SK-N-SH (cell line): ENCODE measurements at regions of chr20 and their contacts with region 1.

Region 1: GRCh38 chr20:47663333-47664067 is 121.8 kb downstream of the SULF2 start:
- DNase-seq: peak; percentile 87
- H3K4me3 ChIP-seq: peak overlapping the region in 1 of 2 experiments; percentile 20; a peak in 1 of 4 replicates
- H3K27ac ChIP-seq: no peak overlapping the region
- H3K4me1 ChIP-seq: peaks cover 3 to 4% of the 10 kb centered on the region in 2 experiments; a peak in 2 of 4 replicates
- H3K27me3 ChIP-seq: no peaks in the 10 kb centered on the region
- CTCF ChIP-seq: peak; percentile 95
- EP300 ChIP-seq: no peak
- RAD21 ChIP-seq: peak; percentile 92

Region 2: GRCh38 chr20:47648943-47649342 is 14.6 kb before region 1 on chr20:
- CTCF ChIA-PET with region 1: interaction called, 16 read pairs
- POLR2A ChIA-PET with region 1: no interaction called
- DNase-seq: no peak
- H3K4me3 ChIP-seq: no peak overlapping the region
- H3K27ac ChIP-seq: no peak overlapping the region
- H3K4me1 ChIP-seq: no peaks in the 10 kb centered on the region
- H3K27me3 ChIP-seq: no peaks in the 10 kb centered on the region
- CTCF ChIP-seq: no peak
- EP300 ChIP-seq: no peak
- RAD21 ChIP-seq: no peak

Region 3: DNA sequence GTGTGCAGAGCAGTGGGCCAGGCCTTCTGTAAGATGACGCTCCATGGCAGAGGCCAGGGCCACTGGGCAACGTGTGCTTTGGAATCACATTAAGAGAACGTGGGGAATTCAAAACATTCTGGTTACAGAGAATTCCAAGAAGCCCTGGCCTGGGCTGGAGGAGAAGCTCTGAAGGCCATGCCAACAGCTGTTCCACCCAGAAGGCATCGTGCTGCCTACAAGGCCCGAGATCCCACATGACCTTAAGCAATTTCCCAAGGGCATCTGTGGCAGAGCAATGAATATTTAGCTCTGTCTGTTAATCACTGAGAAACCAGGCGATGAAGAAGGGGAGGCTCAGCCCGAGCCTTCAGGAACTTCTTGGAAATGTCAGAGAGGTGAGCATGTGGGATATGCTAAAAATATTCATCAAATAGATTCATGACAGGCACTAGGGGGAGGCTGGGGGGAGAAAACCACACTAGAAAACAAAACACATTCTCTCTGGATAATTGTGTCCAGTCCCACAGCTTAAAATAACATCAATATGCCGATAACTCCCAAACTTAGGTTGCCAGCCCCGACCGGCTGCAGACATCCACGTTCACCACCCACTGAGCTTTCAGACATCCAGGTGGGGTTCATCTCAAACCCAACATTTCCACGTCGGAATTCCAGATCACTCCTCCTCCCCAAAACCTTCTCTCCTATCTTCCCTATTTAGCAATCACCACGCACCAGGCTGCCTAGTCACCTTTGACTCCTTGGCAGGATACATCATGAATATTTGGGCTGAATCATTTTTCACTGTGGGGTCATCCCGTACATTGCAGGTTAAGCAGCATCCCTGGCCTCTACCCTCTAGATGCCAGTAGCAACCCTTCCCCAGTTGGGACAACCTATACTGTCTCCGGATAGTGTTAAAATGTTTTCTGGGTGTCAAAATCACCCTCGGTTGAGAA is 115.2 kb after region 1 on chr20:
- CTCF ChIA-PET with region 1: interaction called, 11 read pairs
- POLR2A ChIA-PET with region 1: no interaction called
- DNase-seq: no peak
- H3K4me3 ChIP-seq: no peak overlapping the region
- H3K27ac ChIP-seq: no peak overlapping the region
- H3K4me1 ChIP-seq: peaks cover 0 to 40% of the 10 kb centered on the region in 2 experiments; a peak in 2 of 4 replicates
- H3K27me3 ChIP-seq: 0 out of 2 replicates have a peak, but pooled peaks cover 3% of the 10 kb centered on the region
- CTCF ChIP-seq: no peak
- EP300 ChIP-seq: no peak
- RAD21 ChIP-seq: no peak